ENCODE measurements at regions of chr3 and their contacts with region 1.

Region 1: DNA sequence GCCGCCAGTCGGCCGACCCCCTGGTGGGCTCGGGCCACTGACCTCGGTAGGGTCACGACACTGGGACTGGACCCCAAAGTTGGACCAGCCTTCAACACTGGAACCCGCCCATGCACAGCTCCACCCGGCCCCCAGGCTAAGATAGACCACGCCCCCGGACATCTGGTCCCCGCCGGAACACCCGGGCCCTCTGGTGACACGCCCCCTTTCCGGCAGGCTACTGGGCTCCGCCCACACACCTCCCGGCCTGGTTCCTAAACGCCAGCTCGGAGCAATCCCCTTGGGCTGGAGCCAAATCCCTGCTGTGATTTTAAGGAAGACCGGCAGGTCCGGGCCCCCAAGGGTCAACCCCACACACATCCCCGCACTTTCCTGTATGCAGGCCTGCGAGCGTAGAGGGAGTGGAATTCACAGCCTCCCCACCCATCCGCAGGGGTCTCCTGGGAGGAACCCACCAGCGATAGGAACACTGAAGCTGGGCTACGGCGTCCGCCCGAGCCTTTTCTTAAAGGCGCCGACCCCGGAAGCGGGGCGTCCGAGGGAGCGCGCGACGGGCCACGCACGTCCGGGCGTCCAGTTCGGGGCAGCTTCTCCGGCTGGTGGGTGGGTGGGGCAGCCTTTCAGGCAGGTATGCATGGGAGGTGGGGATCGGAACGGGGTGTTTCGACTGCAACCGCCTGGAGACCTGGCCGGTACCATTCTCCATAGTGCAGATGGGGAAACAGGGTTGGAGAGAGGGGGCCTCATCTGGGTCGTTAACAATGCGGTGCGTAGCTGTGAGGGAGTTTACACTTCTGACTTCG is at the start of gene HEMK1:
- DNase-seq: peak; percentile 94
- H3K4me3 Mint-ChIP-seq: peak within 1 kb of the TSS; percentile 91
- H3K27ac Mint-ChIP-seq: peak within 1 kb of the TSS; percentile 95
- H3K4me1 Mint-ChIP-seq: no peaks in the 10 kb centered on the region
- H3K27me3 Mint-ChIP-seq: no peaks in the 10 kb centered on the region
- CTCF ChIP-seq: no peak
- total RNA-seq, gene HEMK1: 19.9 and 23.8 TPM in 2 replicates

Region 2: DNA sequence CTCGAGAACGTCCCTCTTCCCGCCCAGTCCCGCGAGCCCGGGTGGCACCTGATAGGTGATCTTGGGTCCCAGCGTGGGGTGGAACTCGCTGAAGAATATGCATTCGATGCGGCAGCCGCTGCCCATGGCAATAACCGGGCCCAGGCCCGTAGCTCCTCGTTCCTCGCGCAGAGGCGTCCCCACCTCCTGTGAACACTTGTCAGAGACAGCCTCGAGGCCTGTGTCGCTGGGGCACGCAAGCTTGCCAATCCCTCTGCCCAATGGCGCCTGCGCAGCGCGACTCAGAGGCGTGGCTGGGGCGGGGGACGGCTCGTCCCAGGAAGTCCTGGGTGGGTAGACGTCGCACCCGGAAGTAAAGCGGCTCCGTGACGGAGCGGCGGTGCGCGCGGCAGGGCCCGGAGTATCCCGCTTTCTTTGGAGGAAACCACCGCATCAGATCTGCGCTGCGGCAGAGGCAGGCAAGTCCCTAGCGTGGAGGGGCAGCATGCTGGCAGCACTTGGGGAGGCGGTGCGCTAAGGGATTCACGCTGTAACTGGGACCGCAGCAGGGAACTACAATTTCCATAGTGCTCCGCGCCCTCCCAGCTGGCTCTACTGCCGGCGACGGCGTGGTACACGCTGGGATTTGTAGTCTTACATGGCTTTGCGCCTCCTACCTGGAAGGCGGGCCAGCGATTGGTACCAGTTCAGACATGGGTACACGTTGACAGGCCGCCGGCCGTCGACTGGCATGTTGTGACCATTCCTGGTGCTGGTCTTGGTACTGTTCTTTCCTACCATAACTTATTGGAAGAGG is 218.4 kb before region 1 on chr3 and contains the starts of genes CYB561D2 and NPRL2:
- CTCF ChIA-PET with region 1: interaction called, 6 read pairs
- POLR2A ChIA-PET with region 1: interaction called, 14 read pairs
- intact Hi-C with region 1: no loop called
- DNase-seq: peak; percentile 95
- H3K4me3 Mint-ChIP-seq: peak within 1 kb of the TSS; percentile 87
- H3K27ac Mint-ChIP-seq: peak within 1 kb of the TSS; percentile 95
- H3K4me1 Mint-ChIP-seq: peaks cover 26% of the 10 kb centered on the region
- H3K27me3 Mint-ChIP-seq: no peaks in the 10 kb centered on the region
- CTCF ChIP-seq: no peak
- total RNA-seq, gene CYB561D2: 24.0 and 24.1 TPM in 2 replicates
- total RNA-seq, gene NPRL2: 21.1 and 22.1 TPM in 2 replicates

Region 3: DNA sequence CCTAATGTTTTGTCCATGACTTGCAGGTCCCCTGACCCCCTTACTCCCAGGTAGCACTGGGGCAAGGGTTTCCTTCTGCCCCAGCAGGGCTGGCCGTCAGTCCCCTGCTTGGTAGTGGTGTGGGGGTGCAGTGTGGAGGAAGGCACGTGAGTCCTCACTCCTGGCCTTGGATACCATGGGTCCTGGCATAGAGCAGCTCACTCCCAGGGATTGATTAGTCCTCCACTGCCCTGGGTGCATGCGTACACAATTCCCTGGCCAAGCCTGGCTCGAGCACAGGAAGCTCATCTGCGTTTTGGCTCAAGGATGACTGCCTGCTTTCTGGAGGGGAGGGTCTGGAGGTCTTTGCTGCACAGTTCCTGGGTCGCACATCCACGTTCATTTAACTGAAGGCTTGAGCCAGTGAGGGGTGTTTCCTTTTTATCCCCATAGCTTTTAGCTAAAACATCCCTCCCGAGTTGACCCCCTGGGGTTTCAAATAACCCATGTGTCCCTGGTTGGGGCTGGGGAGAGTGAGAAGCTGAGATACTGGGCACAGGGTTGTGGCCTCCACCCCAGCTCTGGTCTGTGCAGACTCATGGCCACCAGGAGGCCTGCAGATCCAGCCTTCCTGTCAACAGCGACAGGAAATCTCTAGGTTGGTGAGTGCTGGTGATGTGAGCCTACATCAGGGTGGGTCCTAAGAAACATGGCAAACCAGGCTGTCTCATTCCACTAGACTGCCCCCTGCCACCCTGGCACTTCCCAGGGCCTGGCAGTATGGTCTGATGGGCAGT is 11.7 kb after region 1 on chr3:
- CTCF ChIA-PET with region 1: interaction called, 33 read pairs
- POLR2A ChIA-PET with region 1: interaction called, 7 read pairs
- intact Hi-C with region 1: no loop called
- DNase-seq: no peak
- H3K4me3 Mint-ChIP-seq: no peak overlapping the region
- H3K27ac Mint-ChIP-seq: no peak overlapping the region
- H3K4me1 Mint-ChIP-seq: peaks cover 13% of the 10 kb centered on the region
- H3K27me3 Mint-ChIP-seq: no peaks in the 10 kb centered on the region
- CTCF ChIP-seq: no peak

Region 4: GRCh38 chr3:50600841-50601591 is 31.9 kb after region 1 on chr3:
- CTCF ChIA-PET with region 1: interaction called, 40 read pairs
- POLR2A ChIA-PET with region 1: interaction called, 63 read pairs
- intact Hi-C with region 1: loop called (anchors 1 kb)
- DNase-seq: peak; percentile 98
- H3K4me3 Mint-ChIP-seq: peak overlapping the region; percentile 30
- H3K27ac Mint-ChIP-seq: peak overlapping the region; percentile 89
- H3K4me1 Mint-ChIP-seq: peaks cover 21% of the 10 kb centered on the region
- H3K27me3 Mint-ChIP-seq: no peaks in the 10 kb centered on the region
- CTCF ChIP-seq: no peak

Region 5: GRCh38 chr3:51384726-51385473 is 815.8 kb after region 1 on chr3 and contains the start of gene MANF:
- CTCF ChIA-PET with region 1: interaction called, 8 read pairs
- POLR2A ChIA-PET with region 1: interaction called, 27 read pairs
- intact Hi-C with region 1: no loop called
- DNase-seq: peak; percentile 98
- H3K4me3 Mint-ChIP-seq: peak within 1 kb of the TSS; percentile 90
- H3K27ac Mint-ChIP-seq: peak within 1 kb of the TSS; percentile 98
- H3K4me1 Mint-ChIP-seq: peaks cover 26% of the 10 kb centered on the region
- H3K27me3 Mint-ChIP-seq: no peaks in the 10 kb centered on the region
- CTCF ChIP-seq: no peak
- total RNA-seq, gene MANF: 271 and 273 TPM in 2 replicates

Measured in MCF 10A (cell line).